Activated CD4-positive, alpha-beta T cell treated with anti-CD3 and anti-CD28 coated beads for 36 hours (primary cell): ENCODE measurements at regions of chr2 and their contacts with region 1.

Region 1: GRCh38 chr2:85642725-85643124 is 25.3 kb downstream of the SFTPB start:
- DNase-seq: peak; percentile 30
- ATAC-seq: peak; percentile 82
- H3K4me3 Mint-ChIP-seq: no peak overlapping the region
- H3K27ac Mint-ChIP-seq: peak overlapping the region; percentile 27
- H3K4me1 Mint-ChIP-seq: peaks cover 14% of the 10 kb centered on the region
- H3K27me3 Mint-ChIP-seq: no peaks in the 10 kb centered on the region

Region 2: DNA sequence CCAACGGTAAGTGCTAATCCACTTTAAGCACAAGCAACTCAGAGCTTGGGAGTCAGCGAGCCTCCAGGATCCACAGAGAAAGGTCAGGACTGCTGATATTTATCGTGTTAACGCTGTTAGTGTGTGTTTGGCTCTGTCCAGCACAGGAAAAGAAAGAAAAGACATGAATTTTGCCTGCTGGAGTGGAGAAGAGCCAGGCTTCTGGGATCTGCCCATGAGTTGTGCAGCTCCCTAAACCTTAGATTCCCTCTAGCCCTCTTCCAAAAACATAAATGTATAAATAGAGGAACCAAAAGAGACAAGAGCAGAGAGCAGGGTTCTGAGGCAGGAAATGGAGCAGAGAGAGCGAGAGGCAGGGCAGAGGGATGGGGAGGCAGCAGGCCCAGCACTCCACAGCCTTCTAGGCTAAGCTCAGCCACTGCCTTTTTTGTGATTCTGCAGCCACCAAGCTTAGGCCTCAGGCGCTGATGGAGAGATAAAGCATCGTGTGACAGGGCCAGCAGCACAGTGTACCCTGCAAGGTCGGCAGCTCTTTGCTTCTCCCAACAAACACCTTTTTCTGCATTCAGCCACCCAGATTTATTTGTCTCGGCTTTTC is 118.3 kb before region 1 on chr2:
- CTCF ChIA-PET with region 1: no interaction called
- POLR2A ChIA-PET with region 1: no interaction called
- intact Hi-C with region 1: no loop called
- DNase-seq: no peak
- ATAC-seq: no peak
- H3K4me3 Mint-ChIP-seq: no peak overlapping the region
- H3K27ac Mint-ChIP-seq: no peak overlapping the region
- H3K4me1 Mint-ChIP-seq: no peaks in the 10 kb centered on the region
- H3K27me3 Mint-ChIP-seq: peaks cover 12% of the 10 kb centered on the region

Region 3: GRCh38 chr2:85602476-85603234 is 40.1 kb before region 1 on chr2 and contains the start of gene TMEM150A:
- CTCF ChIA-PET with region 1: interaction called, 13 read pairs
- POLR2A ChIA-PET with region 1: no interaction called
- intact Hi-C with region 1: no loop called
- DNase-seq: peak; percentile 92
- ATAC-seq: peak; percentile 95
- H3K4me3 Mint-ChIP-seq: peak within 1 kb of the TSS; percentile 90
- H3K27ac Mint-ChIP-seq: peak within 1 kb of the TSS; percentile 78
- H3K4me1 Mint-ChIP-seq: peaks cover 27% of the 10 kb centered on the region
- H3K27me3 Mint-ChIP-seq: no peaks in the 10 kb centered on the region
- total RNA-seq, gene TMEM150A: 1.3 to 2.5 TPM

Region 4: GRCh38 chr2:85619617-85620016 is 23.1 kb before region 1 on chr2:
- CTCF ChIA-PET with region 1: interaction called, 47 read pairs
- POLR2A ChIA-PET with region 1: interaction called, 5 read pairs
- intact Hi-C with region 1: no loop called
- DNase-seq: no peak
- ATAC-seq: no peak
- H3K4me3 Mint-ChIP-seq: no peak overlapping the region
- H3K27ac Mint-ChIP-seq: no peak overlapping the region
- H3K4me1 Mint-ChIP-seq: peaks cover 18% of the 10 kb centered on the region
- H3K27me3 Mint-ChIP-seq: no peaks in the 10 kb centered on the region

Region 5: DNA sequence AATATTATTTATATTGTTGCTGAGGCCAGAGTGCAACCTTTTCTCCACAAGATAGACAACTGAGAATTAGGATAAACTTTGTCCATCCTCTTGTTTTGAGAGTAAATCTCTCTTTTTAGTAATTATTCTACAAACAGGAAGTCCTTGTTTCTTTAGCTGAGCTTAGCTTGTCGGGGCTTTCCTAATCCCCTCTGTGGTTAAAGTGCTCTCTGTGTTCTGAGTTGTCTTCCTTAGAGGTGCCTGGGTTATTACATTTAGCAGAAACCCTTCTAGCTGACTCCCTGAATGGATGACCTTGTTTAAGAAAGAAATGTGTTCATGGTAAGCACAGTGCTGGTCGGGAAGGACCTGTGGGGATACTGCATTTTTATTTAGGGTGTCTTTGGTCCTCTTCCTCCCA is 14.1 kb before region 1 on chr2:
- CTCF ChIA-PET with region 1: interaction called, 45 read pairs
- POLR2A ChIA-PET with region 1: no interaction called
- intact Hi-C with region 1: no loop called
- DNase-seq: no peak
- ATAC-seq: peak; percentile 61
- H3K4me3 Mint-ChIP-seq: no peak overlapping the region
- H3K27ac Mint-ChIP-seq: peak overlapping the region; percentile 67
- H3K4me1 Mint-ChIP-seq: peaks cover 3% of the 10 kb centered on the region
- H3K27me3 Mint-ChIP-seq: no peaks in the 10 kb centered on the region